ENCODE measurements at regions of chr18 and their contacts with region 1.

Region 1: DNA sequence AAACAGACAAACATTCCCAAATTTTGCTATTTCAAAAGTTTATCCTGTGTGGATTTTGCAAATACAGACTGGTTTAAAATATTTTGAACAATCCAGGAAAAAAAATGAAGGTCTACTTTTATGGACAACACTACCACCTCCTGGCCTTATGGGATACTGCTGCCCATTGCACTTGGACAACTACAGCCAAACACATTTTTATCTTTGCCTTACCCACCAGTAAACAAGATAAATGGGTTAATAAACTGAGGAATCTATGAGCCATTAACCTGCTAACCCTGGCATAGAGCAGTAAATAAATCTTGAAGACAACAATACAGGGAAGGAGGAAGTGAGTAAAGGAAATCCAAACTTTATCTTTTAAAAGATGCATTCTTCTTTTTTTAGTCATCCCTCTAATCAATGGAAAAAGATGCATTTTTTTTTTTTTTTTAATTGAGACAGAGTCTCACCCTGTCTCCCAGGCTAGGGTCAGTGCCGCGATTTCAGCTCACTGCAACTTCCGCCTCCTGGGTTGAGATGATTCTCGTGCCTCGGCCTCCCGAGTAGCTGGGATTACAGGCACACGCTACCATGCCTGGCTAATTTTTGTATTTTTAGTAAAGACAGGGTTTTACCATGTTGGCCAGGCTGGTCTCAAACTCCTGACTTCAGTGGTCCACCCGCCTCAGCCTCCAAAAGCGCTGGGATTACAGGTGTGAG is 2.1 kb upstream of the SPIRE1 start:
- DNase-seq: peak; percentile 77
- H3K4me3 ChIP-seq: no peak overlapping the region
- H3K27ac ChIP-seq: no peak overlapping the region
- H3K4me1 ChIP-seq: peaks cover 7% of the 10 kb centered on the region
- H3K27me3 ChIP-seq: no peaks in the 10 kb centered on the region
- CTCF ChIP-seq: peak; percentile 91

Region 2: DNA sequence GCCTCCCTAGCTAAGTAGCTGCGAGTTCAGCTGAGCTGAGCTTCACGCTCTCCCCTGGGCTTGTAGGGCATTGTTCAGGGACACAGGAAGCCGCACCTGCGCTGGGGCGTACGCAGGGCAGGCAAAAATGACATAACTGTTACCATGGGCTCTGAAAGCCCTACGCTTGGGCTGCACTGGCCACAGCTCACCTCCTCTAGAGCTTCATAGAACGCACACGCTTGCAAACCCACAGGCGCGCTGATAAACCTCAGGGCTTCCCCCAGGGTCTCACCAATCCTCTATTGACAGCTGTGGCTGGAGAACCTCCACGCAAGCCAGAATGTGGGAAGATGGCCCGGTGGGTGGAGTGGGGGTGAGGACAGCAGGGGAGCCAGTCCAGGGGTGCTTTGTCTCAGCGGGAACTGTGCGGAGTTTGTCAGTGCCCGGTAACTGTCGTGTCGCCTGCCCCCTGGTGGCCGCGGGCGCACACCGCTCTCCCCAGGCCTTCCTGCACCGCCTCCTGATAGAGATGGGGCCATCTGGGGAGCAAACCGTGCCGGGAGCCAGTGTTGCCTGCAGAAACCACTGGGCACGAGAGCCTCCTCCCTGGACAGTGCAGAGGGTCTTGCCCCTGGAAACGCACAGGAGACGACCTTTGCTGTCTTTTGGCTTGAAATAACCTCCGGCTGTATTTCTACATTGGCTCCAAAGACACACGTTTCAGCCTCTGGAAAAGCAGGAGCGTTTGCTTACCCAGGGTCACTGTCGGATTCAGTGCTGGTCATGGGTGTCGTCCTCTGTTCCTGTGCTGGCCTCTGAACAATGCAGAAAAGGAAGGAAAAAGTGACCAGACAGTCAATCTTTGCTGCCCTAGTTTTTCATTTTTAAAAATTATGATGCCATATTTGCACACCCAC is 422.9 kb before region 1 on chr18:
- CTCF ChIA-PET with region 1: no interaction called
- POLR2A ChIA-PET with region 1: no interaction called
- intact Hi-C with region 1: no loop called
- DNase-seq: peak; percentile 75
- H3K4me3 ChIP-seq: no peak overlapping the region
- H3K27ac ChIP-seq: no peak overlapping the region
- H3K4me1 ChIP-seq: no peaks in the 10 kb centered on the region
- H3K27me3 ChIP-seq: peaks cover 13% of the 10 kb centered on the region
- CTCF ChIP-seq: peak; percentile 97

Region 3: DNA sequence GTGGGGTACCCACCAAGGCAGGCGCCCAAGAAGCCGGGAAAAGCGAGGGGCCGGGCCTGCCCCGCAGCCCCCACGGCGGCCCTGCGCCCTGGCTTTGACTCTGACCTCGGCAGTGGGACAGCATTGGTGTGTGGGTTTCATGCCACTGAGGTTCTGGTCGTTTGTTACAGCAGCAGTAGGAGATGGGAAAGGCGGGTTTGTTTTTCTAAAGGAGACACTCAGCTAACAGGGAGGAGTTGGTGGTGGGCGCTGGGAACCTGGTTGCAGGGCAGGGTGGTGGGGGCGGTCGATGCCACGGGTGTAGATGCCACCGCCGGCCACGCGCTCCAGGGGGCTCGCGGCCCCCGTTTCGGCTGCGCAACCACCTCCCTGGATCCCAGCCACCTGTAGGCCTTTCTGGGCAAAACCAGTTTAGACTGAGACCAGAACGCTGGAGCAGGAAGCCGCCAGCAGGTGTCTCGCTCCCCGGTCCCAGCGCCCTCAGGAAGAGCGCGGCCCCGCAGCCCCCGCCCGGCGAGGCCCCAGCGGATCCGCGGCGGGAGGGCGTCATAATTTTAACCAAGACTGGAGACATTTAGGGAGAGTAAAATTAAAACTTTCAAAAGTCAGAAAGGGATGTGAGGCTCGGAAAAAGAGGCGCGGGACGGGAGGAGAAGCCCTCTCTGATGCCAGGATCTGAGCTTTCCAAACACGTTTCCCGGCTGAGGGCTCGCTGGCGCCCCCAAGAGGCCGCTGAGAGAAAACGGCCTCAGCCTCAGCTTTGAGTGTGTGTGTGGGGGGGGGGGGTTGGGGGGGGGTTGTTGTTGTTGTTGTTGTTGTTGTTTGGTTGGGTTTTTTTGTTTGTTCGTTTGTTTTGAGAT is 388.4 kb before region 1 on chr18:
- CTCF ChIA-PET with region 1: no interaction called
- POLR2A ChIA-PET with region 1: no interaction called
- intact Hi-C with region 1: loop called (anchors 5 kb)
- DNase-seq: peak; percentile 88
- H3K4me3 ChIP-seq: peak overlapping the region; percentile 56
- H3K27ac ChIP-seq: peak overlapping the region; percentile 38
- H3K4me1 ChIP-seq: no peaks in the 10 kb centered on the region
- H3K27me3 ChIP-seq: no peaks in the 10 kb centered on the region
- CTCF ChIP-seq: peak; percentile 88

Region 4: GRCh38 chr18:12934454-12935071 is 274.5 kb after region 1 on chr18:
- CTCF ChIA-PET with region 1: no interaction called
- POLR2A ChIA-PET with region 1: no interaction called
- intact Hi-C with region 1: loop called (anchors 2 kb)
- DNase-seq: peak; percentile 86
- H3K4me3 ChIP-seq: no peak overlapping the region
- H3K27ac ChIP-seq: no peak overlapping the region
- H3K4me1 ChIP-seq: no peaks in the 10 kb centered on the region
- H3K27me3 ChIP-seq: no peaks in the 10 kb centered on the region
- CTCF ChIP-seq: peak; percentile 95

Measured in A673 (cell line).